Breast epithelium (tissue), 4 donors: ENCODE measurements at regions of chr1 and their contacts with region 1.

Region 1: GRCh38 chr1:107669996-107670395 is 295.0 kb downstream of the VAV3 start:
- DNase-seq: peak; percentile 73 to 83
- H3K4me3 ChIP-seq: no peak overlapping the region
- H3K27ac ChIP-seq: peak overlapping the region; percentile 18 to 55
- H3K4me1 ChIP-seq: no peaks in the 10 kb centered on the region
- H3K27me3 ChIP-seq: no peaks in the 10 kb centered on the region
- CTCF ChIP-seq: no peak
- POLR2A ChIP-seq: no peak

Region 2: GRCh38 chr1:107430540-107431228 is 239.3 kb before region 1 on chr1:
- intact Hi-C with region 1: loop called (anchors 10 kb)
- DNase-seq: no peak
- H3K4me3 ChIP-seq: no peak overlapping the region
- H3K27ac ChIP-seq: no peak overlapping the region
- H3K4me1 ChIP-seq: no peaks in the 10 kb centered on the region
- H3K27me3 ChIP-seq: no peaks in the 10 kb centered on the region
- CTCF ChIP-seq: peak in 2 of 3 donors; percentile 45 to 50
- POLR2A ChIP-seq: no peak

Region 3: GRCh38 chr1:107704911-107705310 is 34.9 kb after region 1 on chr1:
- intact Hi-C with region 1: no loop called
- DNase-seq: no peak
- H3K4me3 ChIP-seq: no peak overlapping the region
- H3K27ac ChIP-seq: no peak overlapping the region
- H3K4me1 ChIP-seq: no peaks in the 10 kb centered on the region
- H3K27me3 ChIP-seq: no peaks in the 10 kb centered on the region
- CTCF ChIP-seq: no peak
- POLR2A ChIP-seq: no peak